ENCODE measurements at regions of chr5 and their contacts with region 1.

Region 1: DNA sequence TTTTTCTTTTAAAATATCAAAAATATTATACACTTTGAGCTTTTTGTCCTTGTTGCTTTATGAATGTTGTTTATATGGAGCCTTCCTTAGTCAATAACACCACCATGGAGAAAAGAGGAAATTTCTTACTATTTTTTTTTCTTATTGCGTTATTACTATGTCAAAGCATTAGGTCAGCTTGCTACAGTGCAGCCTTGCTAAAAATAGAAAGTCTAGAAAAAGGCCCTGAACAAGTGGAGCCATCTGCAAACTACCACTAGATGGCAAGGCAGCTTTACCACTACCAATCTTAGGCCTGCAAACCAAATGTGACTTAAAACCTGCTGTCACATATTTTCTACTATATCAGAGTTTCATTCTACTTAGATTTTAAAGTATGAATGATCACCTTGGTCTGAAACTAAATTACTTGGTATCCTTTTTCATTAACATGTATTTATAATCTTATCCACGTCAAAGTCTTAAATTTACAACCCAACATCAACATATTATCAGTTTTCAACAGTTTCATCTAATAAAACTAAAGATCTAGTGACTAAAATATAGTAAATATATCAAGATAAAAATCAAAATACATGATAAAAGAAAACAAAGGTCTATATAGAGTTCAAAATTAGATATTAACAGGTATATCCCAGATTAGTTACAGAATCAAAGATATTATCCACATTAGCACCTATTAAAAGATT is 113.1 kb upstream of the ACOT12 start:
- DNase-seq: peak in 1 of 2 donors; percentile 57
- H3K4me3 ChIP-seq: no peak overlapping the region
- H3K27ac ChIP-seq: peak overlapping the region in 1 of 2 donors; percentile 43
- H3K4me1 ChIP-seq: no peaks in the 10 kb centered on the region
- H3K27me3 ChIP-seq: no peaks in the 10 kb centered on the region
- CTCF ChIP-seq: peak; percentile 72 to 88 (median 86)
- POLR2A ChIP-seq: no peak

Region 2: GRCh38 chr5:81068063-81068462 is 439.0 kb before region 1 on chr5:
- intact Hi-C with region 1: no loop called
- DNase-seq: no peak
- H3K4me3 ChIP-seq: no peak overlapping the region
- H3K27ac ChIP-seq: no peak overlapping the region
- H3K4me1 ChIP-seq: no peaks in the 10 kb centered on the region
- H3K27me3 ChIP-seq: no peaks in the 10 kb centered on the region
- CTCF ChIP-seq: no peak
- POLR2A ChIP-seq: no peak

Region 3: DNA sequence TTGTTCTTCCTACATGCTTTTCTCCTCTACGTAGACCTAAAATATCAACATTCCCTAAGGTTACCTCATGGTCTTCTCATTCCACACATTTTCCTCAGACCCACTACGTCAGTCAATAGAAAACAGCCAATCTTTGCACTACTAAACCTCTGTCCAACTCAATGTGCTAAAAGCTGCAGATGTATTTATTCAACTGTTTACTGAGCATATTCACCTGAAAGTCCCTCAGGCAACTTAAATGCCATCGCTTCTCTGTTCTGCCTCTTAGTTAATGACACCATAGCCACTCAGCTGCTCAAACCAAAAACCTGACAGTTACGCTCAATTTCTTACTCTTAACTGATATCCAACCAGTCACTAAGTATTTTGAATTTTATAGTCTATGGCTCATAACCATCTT is 168.8 kb after region 1 on chr5:
- intact Hi-C with region 1: no loop called
- DNase-seq: no peak
- H3K4me3 ChIP-seq: no peak overlapping the region
- H3K27ac ChIP-seq: no peak overlapping the region
- H3K4me1 ChIP-seq: peaks cover 0 to under 1% of the 10 kb centered on the region in 2 donors
- H3K27me3 ChIP-seq: no peaks in the 10 kb centered on the region
- CTCF ChIP-seq: no peak
- POLR2A ChIP-seq: no peak

Region 4: DNA sequence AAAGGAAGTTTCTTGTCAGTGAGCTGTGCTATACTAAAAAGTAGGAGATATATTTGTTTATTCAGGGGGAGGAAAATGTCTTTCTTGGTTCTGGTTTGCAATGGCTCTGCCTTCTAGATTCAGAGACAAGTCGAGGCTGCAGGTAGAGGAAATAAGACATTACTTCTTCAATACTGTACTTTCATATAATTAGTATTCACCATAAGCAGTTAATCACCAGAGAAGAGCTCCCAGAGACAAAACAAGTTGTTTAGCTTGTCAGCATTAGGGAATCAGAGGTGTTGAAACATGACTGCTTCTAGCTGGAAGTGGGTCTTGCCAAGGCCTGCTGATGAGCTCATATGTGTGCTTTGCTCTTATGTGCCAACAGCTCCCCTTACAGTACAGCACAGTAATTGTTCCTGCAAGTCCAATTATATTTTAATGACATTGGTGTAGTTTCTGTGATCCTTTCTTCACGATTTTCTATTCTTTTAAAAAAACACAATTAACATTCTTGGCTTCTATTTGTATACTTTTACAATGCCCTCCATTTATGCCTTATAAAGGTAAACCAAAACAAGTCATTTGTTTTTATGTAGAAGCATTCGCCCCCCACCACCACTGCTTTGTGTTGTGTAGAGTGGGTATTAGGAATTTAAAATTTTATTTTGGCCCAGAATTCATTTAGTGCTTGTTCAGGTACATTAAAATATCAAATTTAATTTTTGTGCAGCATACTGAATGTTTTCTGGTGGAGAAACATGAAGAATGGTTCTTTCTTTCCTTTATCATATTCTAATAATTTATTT is 658.9 kb after region 1 on chr5:
- intact Hi-C with region 1: loop called (anchors 10 kb)
- DNase-seq: peak in 1 of 2 donors; percentile 79
- H3K4me3 ChIP-seq: no peak overlapping the region
- H3K27ac ChIP-seq: peak overlapping the region; percentile 43 to 70
- H3K4me1 ChIP-seq: no peaks in the 10 kb centered on the region
- H3K27me3 ChIP-seq: no peaks in the 10 kb centered on the region
- CTCF ChIP-seq: peak; percentile 20 to 84 (median 83)
- POLR2A ChIP-seq: no peak

Measured in breast epithelium (tissue), 4 donors.